ENCODE measurements at regions of chr15 and their contacts with region 1.

Region 1: DNA sequence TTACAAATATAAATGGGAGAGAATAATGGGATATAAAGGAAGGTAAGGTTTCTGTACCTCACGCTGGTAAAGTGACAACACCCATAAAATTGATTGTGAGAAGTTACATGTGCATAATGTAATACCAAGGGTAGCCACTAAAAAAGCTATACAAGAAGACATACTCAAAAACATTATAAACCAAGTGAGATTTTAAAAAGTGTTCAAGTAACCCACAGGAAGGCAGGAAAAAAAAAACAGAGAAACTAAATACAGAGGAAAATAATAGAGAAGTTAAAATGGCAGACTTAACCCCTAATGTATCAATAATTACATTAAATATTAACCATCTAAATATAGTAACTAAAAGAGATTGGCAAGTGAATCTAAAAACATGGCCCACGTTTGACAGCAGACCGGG is 76.3 kb downstream of the PCSK6 start:
- DNase-seq: no peak
- ATAC-seq: no peak
- H3K4me3 ChIP-seq: no peak overlapping the region
- H3K27ac ChIP-seq: no peak overlapping the region
- H3K4me1 ChIP-seq: no peaks in the 10 kb centered on the region
- H3K27me3 ChIP-seq: no peaks in the 10 kb centered on the region
- CTCF ChIP-seq: peak in 2 of 9 donors; percentile 13 to 19

Region 2: GRCh38 chr15:101242160-101242998 is 170.9 kb before region 1 on chr15:
- intact Hi-C with region 1: no loop called
- DNase-seq: peak in 1 of 2 donors; percentile 34
- ATAC-seq: peak in 7 of 8 donors; percentile 37 to 70 (median 45)
- H3K4me3 ChIP-seq: peak overlapping the region in 2 of 10 donors; percentile 7 to 30
- H3K27ac ChIP-seq: peak overlapping the region in 8 of 10 donors; percentile 4 to 80 (median 46)
- H3K4me1 ChIP-seq: peaks cover 10 to 100% (median 75%) of the 10 kb centered on the region in 9 donors
- H3K27me3 ChIP-seq: no peaks in the 10 kb centered on the region
- CTCF ChIP-seq: no peak

Region 3: DNA sequence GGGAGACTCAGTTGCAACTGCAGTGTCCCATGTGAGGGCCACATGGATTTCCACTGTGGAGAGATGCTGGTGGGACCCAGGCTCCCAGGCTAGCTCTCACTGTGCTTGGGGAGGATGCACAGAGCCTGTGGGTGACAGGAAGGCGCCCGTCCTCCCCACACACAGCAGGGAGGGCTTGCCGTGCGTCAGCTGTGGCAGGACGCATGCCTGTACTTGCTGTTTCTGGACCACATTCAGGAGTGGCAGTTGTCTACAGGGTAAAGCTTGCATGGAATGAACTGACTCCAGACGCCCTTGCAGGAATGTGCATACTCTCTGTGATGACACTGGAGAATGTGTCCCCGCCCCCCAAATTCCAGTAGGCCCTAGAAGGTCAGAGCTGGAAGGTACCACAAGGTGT is 54.3 kb before region 1 on chr15:
- intact Hi-C with region 1: loop called in 1 of 10 experiments (anchors 5 kb)
- DNase-seq: peak; percentile 22 to 53
- ATAC-seq: peak; percentile 43 to 91 (median 82)
- H3K4me3 ChIP-seq: no peak overlapping the region
- H3K27ac ChIP-seq: peak overlapping the region in 5 of 10 donors; percentile 42 to 71 (median 58)
- H3K4me1 ChIP-seq: peaks cover 0 to 23% (median 15%) of the 10 kb centered on the region in 9 donors
- H3K27me3 ChIP-seq: no peaks in the 10 kb centered on the region
- CTCF ChIP-seq: no peak

Region 4: DNA sequence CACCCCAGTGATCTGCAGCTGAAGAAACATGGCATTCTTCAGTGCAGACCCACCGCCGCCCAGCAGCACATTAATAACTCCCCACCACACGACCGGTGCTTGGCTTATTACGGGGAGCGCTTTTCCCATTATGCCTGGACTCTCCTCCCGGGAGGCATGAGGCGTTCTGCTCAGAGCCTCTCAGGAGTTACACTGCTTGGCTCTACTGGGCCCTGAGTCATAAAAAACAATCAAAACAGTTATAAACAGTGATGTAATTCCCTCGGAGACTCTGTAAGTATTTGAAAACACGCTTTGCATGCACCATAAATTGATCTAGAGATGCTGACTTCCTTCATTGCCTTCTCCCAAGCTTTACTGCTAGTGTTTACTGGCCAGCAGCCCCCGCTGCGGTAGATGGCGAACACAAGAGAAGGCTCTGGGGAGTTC is 41.1 kb before region 1 on chr15:
- intact Hi-C with region 1: no loop called
- DNase-seq: no peak
- ATAC-seq: peak in 1 of 8 donors; percentile 51
- H3K4me3 ChIP-seq: no peak overlapping the region
- H3K27ac ChIP-seq: no peak overlapping the region
- H3K4me1 ChIP-seq: peaks cover 0 to 24% (median 5%) of the 10 kb centered on the region in 9 donors
- H3K27me3 ChIP-seq: no peaks in the 10 kb centered on the region
- CTCF ChIP-seq: no peak

Region 5: DNA sequence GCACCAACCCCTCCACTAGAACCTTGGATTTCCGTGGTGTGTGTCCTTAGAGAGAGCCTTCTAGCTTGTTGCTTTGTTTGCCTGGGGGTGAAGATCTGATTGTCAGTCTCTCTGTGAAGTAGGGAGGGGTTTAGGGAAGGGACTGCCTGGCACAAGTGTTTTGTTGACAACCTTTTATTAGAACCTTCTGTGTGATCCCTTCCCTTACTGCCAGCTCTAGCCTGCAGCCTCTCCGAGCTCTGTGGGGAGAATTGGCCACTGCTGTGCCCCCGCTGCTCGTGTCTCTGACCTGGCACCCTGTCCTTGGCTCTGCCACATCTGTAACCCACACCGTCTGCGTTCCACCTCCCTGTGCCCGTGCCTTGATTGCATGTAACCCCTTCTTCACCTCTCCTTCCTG is 107.2 kb after region 1 on chr15:
- intact Hi-C with region 1: no loop called
- DNase-seq: no peak
- ATAC-seq: peak in 1 of 8 donors; percentile 39
- H3K4me3 ChIP-seq: no peak overlapping the region
- H3K27ac ChIP-seq: no peak overlapping the region
- H3K4me1 ChIP-seq: peaks cover 0 to 4% (median 0%) of the 10 kb centered on the region in 9 donors
- H3K27me3 ChIP-seq: peaks cover 0 to 16% (median 0%) of the 10 kb centered on the region in 7 donors
- CTCF ChIP-seq: no peak

Measured in heart right ventricle (tissue), 16 donors.